Sigmoid colon (tissue), 7 donors: ENCODE measurements at regions of chrX and their contacts with region 1.

Region 1: DNA sequence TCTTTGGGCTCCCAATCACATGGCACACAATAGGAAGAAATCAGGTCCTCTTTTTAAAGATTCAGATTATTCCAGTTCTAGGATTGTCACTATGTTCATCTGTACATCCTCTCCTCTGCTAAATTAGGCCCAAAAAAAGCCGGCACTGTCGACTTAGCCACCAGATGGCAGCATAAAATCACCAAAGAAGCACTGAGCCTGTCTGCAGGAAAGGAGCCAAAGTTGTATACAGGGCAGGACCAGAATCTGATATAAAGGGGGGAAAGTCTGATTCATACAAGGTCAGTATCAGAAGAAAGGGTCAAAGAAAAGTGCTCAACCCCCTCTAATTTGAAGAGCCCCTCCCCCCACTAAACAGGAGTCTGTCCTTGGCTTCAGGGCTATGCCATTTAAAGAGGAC is 292.5 kb downstream of the CHIC1 start:
- DNase-seq: peak; percentile 86
- H3K4me3 ChIP-seq: no peak overlapping the region
- H3K27ac ChIP-seq: no peak overlapping the region
- H3K4me1 ChIP-seq: no peaks in the 10 kb centered on the region
- H3K27me3 ChIP-seq: no peaks in the 10 kb centered on the region
- CTCF ChIP-seq: peak; percentile 42 to 74 (median 55)
- EP300 ChIP-seq: no peak
- POLR2A ChIP-seq: no peak

Region 2: GRCh38 chrX:73812256-73812655 is 43.3 kb before region 1 on chrX:
- intact Hi-C with region 1: no loop called
- DNase-seq: no peak
- H3K4me3 ChIP-seq: no peak overlapping the region
- H3K27ac ChIP-seq: no peak overlapping the region
- H3K4me1 ChIP-seq: no peaks in the 10 kb centered on the region
- H3K27me3 ChIP-seq: no peaks in the 10 kb centered on the region
- CTCF ChIP-seq: no peak
- EP300 ChIP-seq: no peak
- POLR2A ChIP-seq: no peak

Region 3: GRCh38 chrX:73992019-73992418 is 136.5 kb after region 1 on chrX:
- intact Hi-C with region 1: no loop called
- DNase-seq: no peak
- H3K4me3 ChIP-seq: no peak overlapping the region
- H3K27ac ChIP-seq: no peak overlapping the region
- H3K4me1 ChIP-seq: no peaks in the 10 kb centered on the region
- H3K27me3 ChIP-seq: no peaks in the 10 kb centered on the region
- CTCF ChIP-seq: no peak
- EP300 ChIP-seq: no peak
- POLR2A ChIP-seq: no peak

Region 4: DNA sequence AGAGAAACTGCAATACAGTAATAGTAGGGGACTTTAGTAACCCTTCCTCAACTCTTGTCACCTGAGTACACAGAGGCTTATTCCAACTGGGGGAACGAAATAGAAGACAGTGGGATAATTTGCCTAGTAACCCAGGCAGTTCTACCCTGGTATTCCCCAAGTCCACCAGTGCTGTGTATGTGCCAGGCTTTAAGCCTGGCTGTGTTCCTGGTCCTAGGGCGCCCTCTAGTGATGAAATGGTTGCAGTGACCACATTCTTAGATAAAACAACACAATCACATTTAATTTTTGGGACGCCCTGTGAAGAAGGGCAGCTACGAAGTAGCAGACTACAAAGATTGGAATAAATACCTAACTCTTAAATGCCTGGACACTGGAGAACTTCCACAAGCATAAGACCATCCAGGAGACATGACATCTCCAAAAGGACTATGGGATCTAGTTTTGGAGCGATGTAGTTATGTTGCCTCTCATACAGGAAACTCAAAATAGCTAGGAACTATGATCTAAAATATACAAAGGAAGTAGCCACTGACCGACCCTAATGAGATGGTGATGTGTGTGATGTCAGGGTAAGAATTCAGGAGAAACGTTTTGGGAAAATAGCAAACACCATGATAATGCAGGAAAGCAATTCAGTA is 160.0 kb after region 1 on chrX:
- intact Hi-C with region 1: loop called (anchors 1 kb)
- DNase-seq: peak; percentile 77
- H3K4me3 ChIP-seq: no peak overlapping the region
- H3K27ac ChIP-seq: no peak overlapping the region
- H3K4me1 ChIP-seq: no peaks in the 10 kb centered on the region
- H3K27me3 ChIP-seq: no peaks in the 10 kb centered on the region
- CTCF ChIP-seq: peak; percentile 36 to 51 (median 49)
- EP300 ChIP-seq: no peak
- POLR2A ChIP-seq: no peak

Region 5: GRCh38 chrX:74133156-74133796 is 277.7 kb after region 1 on chrX:
- intact Hi-C with region 1: loop called (anchors 1 kb)
- DNase-seq: no peak
- H3K4me3 ChIP-seq: no peak overlapping the region
- H3K27ac ChIP-seq: peak overlapping the region in 3 of 4 donors; percentile 15 to 23 (median 22)
- H3K4me1 ChIP-seq: peaks cover 0 to 7% (median 2%) of the 10 kb centered on the region in 4 donors
- H3K27me3 ChIP-seq: no peaks in the 10 kb centered on the region
- CTCF ChIP-seq: peak; percentile 41 to 77 (median 45)
- EP300 ChIP-seq: no peak
- POLR2A ChIP-seq: no peak

Region 6: GRCh38 chrX:74343343-74344279 is 488.1 kb after region 1 on chrX:
- intact Hi-C with region 1: loop called (anchors 1 kb)
- DNase-seq: no peak
- H3K4me3 ChIP-seq: no peak overlapping the region
- H3K27ac ChIP-seq: no peak overlapping the region
- H3K4me1 ChIP-seq: no peaks in the 10 kb centered on the region
- H3K27me3 ChIP-seq: no peaks in the 10 kb centered on the region
- CTCF ChIP-seq: peak in 3 of 4 experiments; percentile 33 to 52 (median 39)
- EP300 ChIP-seq: no peak
- POLR2A ChIP-seq: no peak

Region 7: GRCh38 chrX:74550295-74550802 is 694.8 kb after region 1 on chrX:
- intact Hi-C with region 1: loop called (anchors 5 kb)
- DNase-seq: peak; percentile 91
- H3K4me3 ChIP-seq: peak overlapping the region in 1 of 4 donors; percentile 24
- H3K27ac ChIP-seq: peak overlapping the region in 2 of 4 donors; percentile 39 to 56
- H3K4me1 ChIP-seq: no peaks in the 10 kb centered on the region
- H3K27me3 ChIP-seq: no peaks in the 10 kb centered on the region
- CTCF ChIP-seq: peak; percentile 94 to 96 (median 95)
- EP300 ChIP-seq: no peak
- POLR2A ChIP-seq: no peak